Activated T-helper 1 cell treated with anti-CD3 and anti-CD28 coated beads, Interleukin-12 subunit alpha, Interleukin-12 subunit beta, Interleukin-2, Interleukin-4 antibody, amounts not matched to agents 30 ng/mL and 10 ng/mL and 1 ng/mL, durations not matched to agents 14 hours and 24 hours and 36 hours (primary cell): ENCODE measurements at regions of chr19 and their contacts with region 1.

Region 1: DNA sequence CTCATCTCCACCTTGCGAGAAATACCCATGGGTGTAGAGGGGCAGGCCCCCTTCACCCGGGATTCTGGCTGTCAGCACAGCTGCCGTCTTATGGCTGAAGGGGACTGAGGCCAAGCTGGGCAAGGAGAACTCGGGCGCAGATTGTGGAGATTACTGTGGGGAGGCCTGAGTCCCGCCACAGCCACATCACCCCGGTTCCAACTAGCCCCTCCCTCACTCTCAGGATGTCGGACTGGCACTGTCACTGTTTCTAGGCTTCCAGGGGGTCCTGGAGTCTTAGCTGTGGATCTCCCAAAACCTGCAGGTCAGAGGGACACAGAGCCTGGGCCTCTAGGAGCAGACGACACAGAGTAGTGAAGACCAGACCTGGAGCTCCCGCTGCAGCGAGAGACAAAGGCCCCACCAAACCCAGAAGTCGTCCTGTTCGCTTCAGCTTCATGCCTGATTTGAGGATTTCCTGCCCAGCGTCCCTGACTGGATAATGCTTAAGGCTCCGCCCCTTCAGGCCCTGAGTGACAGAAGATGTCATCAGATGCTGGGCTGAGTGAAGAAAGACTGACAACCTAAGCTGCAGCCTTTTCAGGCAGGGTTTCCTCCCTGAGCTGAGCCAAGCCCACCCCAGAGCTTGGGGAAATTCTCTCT is 55.8 kb downstream of the ZNF93 start:
- DNase-seq: no peak
- H3K4me3 Mint-ChIP-seq: no peak overlapping the region
- H3K27ac Mint-ChIP-seq: no peak overlapping the region
- H3K4me1 Mint-ChIP-seq: no peaks in the 10 kb centered on the region
- H3K27me3 Mint-ChIP-seq: no peaks in the 10 kb centered on the region

Region 2: GRCh38 chr19:19531951-19532805 is 424.4 kb before region 1 on chr19:
- intact Hi-C with region 1: loop called (anchors 1 kb)
- DNase-seq: peak; percentile 79
- H3K4me3 Mint-ChIP-seq: no peak overlapping the region
- H3K27ac Mint-ChIP-seq: peak overlapping the region; percentile 67
- H3K4me1 Mint-ChIP-seq: peaks cover 7% of the 10 kb centered on the region
- H3K27me3 Mint-ChIP-seq: peaks cover 3% of the 10 kb centered on the region

Region 3: GRCh38 chr19:19732579-19733501 is 223.7 kb before region 1 on chr19 and contains the start of gene ZNF14:
- intact Hi-C with region 1: loop called (anchors 5 kb)
- DNase-seq: peak; percentile 86
- H3K4me3 Mint-ChIP-seq: peak within 1 kb of the TSS; percentile 99
- H3K27ac Mint-ChIP-seq: peak within 1 kb of the TSS; percentile 92
- H3K4me1 Mint-ChIP-seq: peaks cover 17% of the 10 kb centered on the region
- H3K27me3 Mint-ChIP-seq: no peaks in the 10 kb centered on the region
- total RNA-seq, gene ZNF14: 4.3 and 5.1 TPM in 2 replicates